ENCODE measurements at regions of chr11 and their contacts with region 1.

Region 1: GRCh38 chr11:95067039-95067840 is 521 bp downstream of the SRSF8 start:
- DNase-seq: peak; percentile 76
- ATAC-seq: peak; percentile 71
- H3K4me3 Mint-ChIP-seq: peak overlapping the region; percentile 93
- H3K27ac Mint-ChIP-seq: peak overlapping the region; percentile 99
- H3K4me1 Mint-ChIP-seq: peaks cover 29% of the 10 kb centered on the region
- H3K27me3 Mint-ChIP-seq: no peaks in the 10 kb centered on the region
- CTCF ChIP-seq: no peak

Region 2: DNA sequence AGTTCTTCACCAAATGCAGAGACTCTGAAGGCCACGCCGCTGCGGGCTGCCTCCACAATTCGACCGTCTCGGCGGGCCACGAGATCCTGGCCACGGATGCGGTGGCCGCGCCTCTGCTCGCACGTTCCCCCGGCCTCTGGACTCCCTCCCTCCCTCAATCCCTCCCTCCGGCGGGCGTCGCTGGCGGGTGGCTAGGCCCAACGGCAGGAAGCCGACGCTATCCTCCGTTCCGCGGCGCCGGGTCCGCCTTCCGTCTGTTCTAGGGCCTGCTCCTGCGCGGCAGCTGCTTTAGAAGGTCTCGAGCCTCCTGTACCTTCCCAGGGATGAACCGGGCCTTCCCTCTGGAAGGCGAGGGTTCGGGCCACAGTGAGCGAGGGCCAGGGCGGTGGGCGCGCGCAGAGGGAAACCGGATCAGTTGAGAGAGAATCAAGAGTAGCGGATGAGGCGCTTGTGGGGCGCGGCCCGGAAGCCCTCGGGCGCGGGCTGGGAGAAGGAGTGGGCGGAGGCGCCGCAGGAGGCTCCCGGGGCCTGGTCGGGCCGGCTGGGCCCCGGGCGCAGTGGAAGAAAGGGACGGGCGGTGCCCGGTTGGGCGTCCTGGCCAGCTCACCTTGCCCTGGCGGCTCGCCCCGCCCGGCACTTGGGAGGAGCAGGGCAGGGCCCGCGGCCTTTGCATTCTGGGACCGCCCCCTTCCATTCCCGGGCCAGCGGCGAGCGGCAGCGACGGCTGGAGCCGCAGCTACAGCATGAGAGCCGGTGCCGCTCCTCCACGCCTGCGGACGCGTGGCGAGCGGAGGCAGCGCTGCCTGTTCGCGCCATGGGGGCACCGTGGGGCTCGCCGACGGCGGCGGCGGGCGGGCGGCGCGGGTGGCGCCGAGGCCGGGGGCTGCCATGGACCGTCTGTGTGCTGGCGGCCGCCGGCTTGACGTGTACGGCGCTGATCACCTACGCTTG is 523.3 kb before region 1 on chr11 and contains the start of gene FUT4:
- CTCF ChIA-PET with region 1: no interaction called
- POLR2A ChIA-PET with region 1: interaction called, 6 read pairs
- intact Hi-C with region 1: loop called (anchors 2 kb)
- DNase-seq: peak; percentile 72
- ATAC-seq: peak; percentile 83
- H3K4me3 Mint-ChIP-seq: peak within 1 kb of the TSS; percentile 98
- H3K27ac Mint-ChIP-seq: peak within 1 kb of the TSS; percentile 97
- H3K4me1 Mint-ChIP-seq: peaks cover 17% of the 10 kb centered on the region
- H3K27me3 Mint-ChIP-seq: peaks cover 10% of the 10 kb centered on the region
- CTCF ChIP-seq: no peak
- total RNA-seq, gene FUT4: 3.4 and 4.1 TPM in 2 replicates

Region 3: DNA sequence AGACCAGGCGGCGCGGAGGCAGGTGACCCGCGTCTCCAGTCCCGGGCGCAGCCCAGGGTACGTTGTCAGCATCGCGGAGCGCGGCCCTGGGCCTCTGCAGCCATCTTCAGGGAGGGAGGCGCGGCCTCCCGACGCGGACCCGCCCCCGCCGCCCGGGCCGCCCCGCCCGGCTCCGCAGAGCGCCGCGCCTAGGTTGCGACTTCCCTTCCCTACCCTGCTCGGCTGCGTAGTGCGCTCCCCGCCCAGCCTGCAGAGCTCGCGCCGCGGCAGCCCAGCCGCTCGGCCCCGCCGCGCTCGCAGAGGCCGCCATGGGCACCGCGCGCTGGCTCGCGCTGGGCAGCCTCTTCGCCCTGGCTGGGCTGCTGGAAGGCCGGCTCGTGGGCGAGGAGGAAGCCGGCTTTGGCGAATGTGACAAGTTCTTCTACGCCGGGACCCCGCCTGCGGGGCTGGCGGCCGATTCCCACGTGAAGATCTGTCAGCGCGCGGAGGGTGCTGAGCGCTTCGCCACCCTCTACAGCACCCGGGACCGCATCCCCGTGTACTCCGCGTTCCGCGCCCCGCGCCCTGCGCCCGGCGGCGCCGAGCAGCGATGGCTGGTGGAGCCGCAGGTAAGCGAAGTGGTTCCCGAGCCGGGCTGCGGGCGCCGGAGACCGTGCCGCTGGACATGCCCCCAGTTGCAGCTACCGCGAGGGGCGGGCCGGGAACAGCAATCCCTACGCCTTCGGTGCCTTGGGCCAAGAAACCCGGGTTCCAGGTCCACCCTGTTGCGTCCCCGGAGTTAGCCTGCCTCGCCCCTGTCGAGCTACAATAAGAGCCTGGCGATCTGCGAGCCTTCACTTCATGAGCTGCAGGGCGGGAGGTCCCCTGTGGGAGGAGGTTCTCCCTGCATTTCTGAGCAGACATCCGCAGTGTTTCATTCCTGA is 22.6 kb after region 1 on chr11 and contains the start of gene ENDOD1:
- CTCF ChIA-PET with region 1: interaction called, 138 read pairs
- POLR2A ChIA-PET with region 1: interaction called, 89 read pairs
- intact Hi-C with region 1: loop called (anchors 1 kb)
- DNase-seq: peak; percentile 88
- ATAC-seq: peak; percentile 93
- H3K4me3 Mint-ChIP-seq: peak within 1 kb of the TSS; percentile 92
- H3K27ac Mint-ChIP-seq: peak within 1 kb of the TSS; percentile 94
- H3K4me1 Mint-ChIP-seq: peaks cover 56% of the 10 kb centered on the region
- H3K27me3 Mint-ChIP-seq: no peaks in the 10 kb centered on the region
- CTCF ChIP-seq: no peak
- total RNA-seq, gene ENDOD1: 9.5 and 9.8 TPM in 2 replicates

Region 4: DNA sequence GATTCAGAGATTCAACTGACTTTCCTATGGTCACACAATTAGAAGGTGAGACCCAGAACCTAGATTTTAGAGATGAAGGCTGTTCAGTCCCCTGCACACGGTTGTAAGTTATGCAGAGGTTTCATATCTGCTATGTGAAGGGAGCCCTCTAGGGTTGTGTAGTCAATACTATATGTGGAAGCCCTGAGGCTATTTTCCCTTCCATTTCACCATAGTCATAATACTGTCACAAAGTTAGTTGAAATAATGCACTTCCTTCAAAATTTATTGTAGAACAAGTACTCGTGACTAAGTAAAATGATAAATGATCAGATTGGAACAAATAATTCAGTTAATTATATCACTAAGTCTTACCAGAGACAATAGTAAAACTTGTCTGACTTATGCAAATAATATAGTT is 71.2 kb after region 1 on chr11:
- CTCF ChIA-PET with region 1: interaction called, 90 read pairs
- POLR2A ChIA-PET with region 1: interaction called, 8 read pairs
- intact Hi-C with region 1: loop called (anchors 1 kb)
- DNase-seq: no peak
- ATAC-seq: peak; percentile 84
- H3K4me3 Mint-ChIP-seq: no peak overlapping the region
- H3K27ac Mint-ChIP-seq: no peak overlapping the region
- H3K4me1 Mint-ChIP-seq: peaks cover 10% of the 10 kb centered on the region
- H3K27me3 Mint-ChIP-seq: no peaks in the 10 kb centered on the region
- CTCF ChIP-seq: no peak

Region 5: DNA sequence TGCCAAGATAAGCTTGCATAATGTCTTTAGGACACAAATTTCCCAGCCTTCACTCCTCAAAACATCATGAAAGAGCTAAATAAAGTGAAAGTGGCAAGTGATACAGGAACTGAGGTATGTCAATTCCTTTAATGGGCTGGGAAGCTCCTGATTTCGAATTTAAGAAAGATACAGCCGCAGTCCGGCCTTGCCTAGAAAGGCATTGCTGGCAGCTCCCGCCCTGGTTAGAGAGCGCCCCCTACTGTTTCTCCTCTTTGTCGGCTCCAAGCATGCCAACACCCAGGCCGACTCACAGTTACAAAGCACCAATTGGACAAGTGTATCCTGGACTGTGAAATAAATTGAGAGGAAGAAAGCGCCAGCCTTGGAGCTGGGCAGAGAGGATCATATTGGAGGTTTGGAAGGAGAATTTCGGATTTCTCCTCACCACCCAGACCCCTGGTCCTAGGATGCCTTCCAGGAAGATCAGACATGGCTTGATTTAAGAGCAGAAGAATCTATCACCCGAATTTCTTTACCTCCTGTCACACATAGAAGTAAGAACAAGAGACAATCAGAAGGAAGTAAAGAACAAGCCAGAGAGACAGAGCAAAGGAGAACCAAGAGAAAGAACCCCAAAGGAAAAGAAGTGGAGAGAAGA is 638.4 kb after region 1 on chr11:
- CTCF ChIA-PET with region 1: interaction called, 9 read pairs
- POLR2A ChIA-PET with region 1: interaction called, 6 read pairs
- intact Hi-C with region 1: loop called (anchors 2 kb)
- DNase-seq: peak; percentile 61
- ATAC-seq: peak; percentile 93
- H3K4me3 Mint-ChIP-seq: no peak overlapping the region
- H3K27ac Mint-ChIP-seq: no peak overlapping the region
- H3K4me1 Mint-ChIP-seq: peaks cover 26% of the 10 kb centered on the region
- H3K27me3 Mint-ChIP-seq: no peaks in the 10 kb centered on the region
- CTCF ChIP-seq: peak; percentile 93

Region 6: GRCh38 chr11:95790123-95790932 is 723.1 kb after region 1 on chr11 and contains the start of gene CEP57:
- CTCF ChIA-PET with region 1: interaction called, 3 read pairs
- POLR2A ChIA-PET with region 1: interaction called, 38 read pairs
- intact Hi-C with region 1: loop called (anchors 1 kb)
- DNase-seq: peak; percentile 84
- ATAC-seq: peak; percentile 64
- H3K4me3 Mint-ChIP-seq: peak within 1 kb of the TSS; percentile 100
- H3K27ac Mint-ChIP-seq: peak within 1 kb of the TSS; percentile 100
- H3K4me1 Mint-ChIP-seq: peaks cover 47% of the 10 kb centered on the region
- H3K27me3 Mint-ChIP-seq: no peaks in the 10 kb centered on the region
- CTCF ChIP-seq: no peak
- total RNA-seq, gene CEP57: 52.6 and 53.7 TPM in 2 replicates

Region 7: DNA sequence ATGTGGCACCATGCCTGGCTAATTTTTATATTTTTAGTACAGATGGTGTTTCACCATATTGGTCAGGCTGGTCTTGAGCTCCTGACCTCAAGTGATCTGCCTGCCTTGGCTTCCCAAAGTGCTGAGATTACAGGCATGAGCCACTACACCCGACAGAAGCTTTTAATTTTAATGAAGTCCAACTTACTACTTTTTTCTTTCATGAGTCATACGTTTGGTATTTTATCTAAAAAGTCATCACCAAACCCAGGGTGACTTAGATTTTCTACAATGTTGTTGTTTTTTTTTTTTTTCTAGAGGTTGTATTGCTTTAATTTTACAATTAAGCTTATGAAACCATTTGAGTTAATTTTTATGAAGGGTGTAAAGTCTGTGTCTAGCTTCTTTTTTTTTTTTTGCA is 1357.5 kb after region 1 on chr11:
- CTCF ChIA-PET with region 1: no interaction called
- POLR2A ChIA-PET with region 1: no interaction called
- intact Hi-C with region 1: loop called (anchors 1 kb)
- DNase-seq: no peak
- ATAC-seq: no peak
- H3K4me3 Mint-ChIP-seq: no peak overlapping the region
- H3K27ac Mint-ChIP-seq: no peak overlapping the region
- H3K4me1 Mint-ChIP-seq: no peaks in the 10 kb centered on the region
- H3K27me3 Mint-ChIP-seq: peaks cover 32% of the 10 kb centered on the region
- CTCF ChIP-seq: no peak

Measured in activated B cell treated with CpG ODN at 0.5 μM for 24 hours (primary cell).